MCF 10A (cell line): ENCODE measurements at regions of chr5 and their contacts with region 1.

Region 1: GRCh38 chr5:142611154-142611553 is 74.7 kb downstream of the FGF1 start:
- DNase-seq: peak; percentile 85
- H3K4me3 Mint-ChIP-seq: no peak overlapping the region
- H3K27ac Mint-ChIP-seq: peak overlapping the region; percentile 29
- H3K4me1 Mint-ChIP-seq: peaks cover 5% of the 10 kb centered on the region
- H3K27me3 Mint-ChIP-seq: no peaks in the 10 kb centered on the region
- CTCF ChIP-seq: peak; percentile 99

Region 2: DNA sequence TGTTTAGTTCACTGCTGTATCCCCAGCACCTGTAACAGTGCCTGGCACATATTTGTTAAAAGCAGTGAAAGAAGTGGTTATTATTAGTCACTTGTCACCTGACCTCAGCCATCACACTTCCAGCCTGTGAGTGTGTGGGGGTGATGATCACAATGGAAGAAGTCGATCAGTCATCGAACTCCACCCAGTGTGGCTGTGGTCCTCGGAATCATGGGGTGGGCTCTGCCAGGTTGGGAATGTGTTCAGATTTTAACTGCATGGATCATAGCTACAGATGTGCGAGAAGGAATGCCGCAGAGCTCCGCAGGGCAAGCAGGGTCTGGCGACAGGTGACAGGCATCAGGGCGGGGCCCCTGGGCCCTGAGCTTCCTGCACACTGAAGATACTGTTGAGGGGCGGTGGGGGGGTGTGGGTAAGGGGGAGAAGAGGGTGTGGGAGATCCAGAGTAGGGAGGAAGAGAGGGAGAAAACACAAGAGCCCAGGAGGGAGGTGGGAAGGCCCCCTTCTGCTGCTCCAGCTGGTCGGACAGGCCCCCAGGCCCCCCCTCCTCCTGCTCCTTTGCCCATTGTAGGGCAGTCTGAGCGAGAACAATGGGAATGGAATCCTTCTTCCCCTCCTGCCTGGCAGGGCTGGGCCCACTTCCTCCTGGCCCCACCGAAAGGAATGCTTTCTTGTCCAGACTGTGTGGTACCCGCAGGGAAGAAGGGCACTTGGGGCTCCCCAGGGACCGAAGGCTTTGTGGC is 375.9 kb before region 1 on chr5:
- CTCF ChIA-PET with region 1: no interaction called
- POLR2A ChIA-PET with region 1: no interaction called
- intact Hi-C with region 1: no loop called
- DNase-seq: no peak
- H3K4me3 Mint-ChIP-seq: no peak overlapping the region
- H3K27ac Mint-ChIP-seq: no peak overlapping the region
- H3K4me1 Mint-ChIP-seq: peaks cover 5% of the 10 kb centered on the region
- H3K27me3 Mint-ChIP-seq: no peaks in the 10 kb centered on the region
- CTCF ChIP-seq: no peak

Region 3: GRCh38 chr5:142304013-142304701 is 307.0 kb before region 1 on chr5:
- CTCF ChIA-PET with region 1: no interaction called
- POLR2A ChIA-PET with region 1: no interaction called
- intact Hi-C with region 1: no loop called
- DNase-seq: no peak
- H3K4me3 Mint-ChIP-seq: no peak overlapping the region
- H3K27ac Mint-ChIP-seq: no peak overlapping the region
- H3K4me1 Mint-ChIP-seq: peaks cover 6% of the 10 kb centered on the region
- H3K27me3 Mint-ChIP-seq: no peaks in the 10 kb centered on the region
- CTCF ChIP-seq: no peak

Region 4: DNA sequence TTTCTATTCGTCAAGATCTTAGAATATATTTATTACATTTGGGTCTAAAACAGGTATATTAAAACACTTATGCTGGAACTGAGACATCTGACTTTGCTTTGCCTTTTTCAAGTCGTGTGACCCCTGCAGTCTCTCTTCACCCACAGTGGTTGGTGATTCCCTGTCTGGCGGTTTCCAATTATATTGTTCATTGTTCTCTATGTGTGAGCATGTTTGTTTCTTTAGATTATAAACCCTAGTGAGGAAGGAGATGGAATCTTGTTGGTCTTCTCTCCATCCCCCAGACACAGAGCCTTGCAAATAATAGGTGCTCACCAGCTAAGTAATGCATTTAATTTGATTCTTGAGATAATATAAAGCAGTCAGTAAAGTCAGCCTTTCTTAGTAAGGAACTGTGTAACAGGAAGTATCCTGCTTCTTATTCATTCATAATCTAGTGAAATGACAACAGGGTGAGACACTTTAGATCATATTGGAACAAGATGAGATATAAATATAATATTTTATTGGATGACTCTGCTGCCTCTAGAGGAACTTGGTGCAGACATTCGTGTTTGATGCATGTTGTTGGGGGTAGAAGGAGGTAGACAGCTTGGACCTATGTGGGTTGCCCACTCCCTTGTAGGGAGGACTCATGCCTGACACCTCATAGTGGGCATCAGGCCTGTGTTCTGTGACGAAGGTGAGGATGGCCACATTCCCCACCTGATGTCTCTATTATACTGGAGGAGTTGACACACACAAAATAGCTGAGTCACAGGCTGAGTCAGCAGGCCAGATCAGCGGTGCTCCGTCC is 13.4 kb before region 1 on chr5:
- CTCF ChIA-PET with region 1: interaction called, 44 read pairs
- POLR2A ChIA-PET with region 1: interaction called, 3 read pairs
- intact Hi-C with region 1: no loop called
- DNase-seq: peak; percentile 89
- H3K4me3 Mint-ChIP-seq: no peak overlapping the region
- H3K27ac Mint-ChIP-seq: no peak overlapping the region
- H3K4me1 Mint-ChIP-seq: peaks cover 16% of the 10 kb centered on the region
- H3K27me3 Mint-ChIP-seq: no peaks in the 10 kb centered on the region
- CTCF ChIP-seq: peak; percentile 20

Region 5: DNA sequence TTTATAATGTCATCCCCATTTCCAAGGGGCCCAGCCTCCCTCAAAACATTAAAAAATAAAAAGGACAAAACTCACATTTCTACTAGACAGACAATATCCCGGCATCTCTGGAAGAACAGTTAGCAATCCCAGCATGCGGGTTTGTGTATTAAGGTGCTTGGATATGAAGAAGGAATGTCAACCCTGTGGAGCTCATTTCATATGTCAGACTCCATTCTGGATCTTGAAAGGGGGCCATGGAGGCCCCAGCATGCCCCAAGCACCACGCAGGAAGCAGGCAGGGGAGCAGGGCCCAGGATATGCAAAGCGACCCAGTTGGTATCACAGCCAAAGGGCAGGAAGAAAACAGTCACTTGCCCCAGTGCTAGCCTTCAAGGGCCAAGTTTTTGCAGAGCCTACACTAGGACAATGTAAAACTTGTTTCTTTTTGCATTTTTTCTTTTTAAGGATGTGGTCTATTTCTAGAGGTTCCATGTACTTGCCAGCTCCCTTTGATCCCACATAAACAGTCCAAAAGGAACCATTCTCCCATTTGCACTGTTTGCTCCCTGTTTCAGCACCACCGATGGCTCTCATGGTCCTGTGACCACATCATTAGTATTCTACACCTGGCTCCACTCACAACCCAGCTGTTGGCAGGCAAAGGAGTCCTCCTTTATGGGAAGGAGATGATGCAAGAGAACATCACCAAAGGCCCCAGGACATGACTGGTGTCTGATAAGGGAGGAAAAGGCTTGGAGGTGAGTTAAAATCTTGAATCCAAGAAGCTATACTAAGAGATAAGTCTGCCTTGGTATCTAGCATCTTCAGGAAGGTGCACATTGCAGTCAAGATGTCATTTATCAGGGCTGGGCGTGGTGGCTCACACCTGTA is 16.5 kb after region 1 on chr5:
- CTCF ChIA-PET with region 1: interaction called, 20 read pairs
- POLR2A ChIA-PET with region 1: no interaction called
- intact Hi-C with region 1: no loop called
- DNase-seq: peak; percentile 42
- H3K4me3 Mint-ChIP-seq: no peak overlapping the region
- H3K27ac Mint-ChIP-seq: no peak overlapping the region
- H3K4me1 Mint-ChIP-seq: no peaks in the 10 kb centered on the region
- H3K27me3 Mint-ChIP-seq: no peaks in the 10 kb centered on the region
- CTCF ChIP-seq: no peak

Region 6: GRCh38 chr5:142644640-142645361 is 33.6 kb after region 1 on chr5:
- CTCF ChIA-PET with region 1: interaction called, 38 read pairs
- POLR2A ChIA-PET with region 1: interaction called, 4 read pairs
- intact Hi-C with region 1: loop called (anchors 1 kb)
- DNase-seq: peak; percentile 99
- H3K4me3 Mint-ChIP-seq: peak overlapping the region; percentile 48
- H3K27ac Mint-ChIP-seq: peak overlapping the region; percentile 85
- H3K4me1 Mint-ChIP-seq: peaks cover 26% of the 10 kb centered on the region
- H3K27me3 Mint-ChIP-seq: no peaks in the 10 kb centered on the region
- CTCF ChIP-seq: no peak

Region 7: DNA sequence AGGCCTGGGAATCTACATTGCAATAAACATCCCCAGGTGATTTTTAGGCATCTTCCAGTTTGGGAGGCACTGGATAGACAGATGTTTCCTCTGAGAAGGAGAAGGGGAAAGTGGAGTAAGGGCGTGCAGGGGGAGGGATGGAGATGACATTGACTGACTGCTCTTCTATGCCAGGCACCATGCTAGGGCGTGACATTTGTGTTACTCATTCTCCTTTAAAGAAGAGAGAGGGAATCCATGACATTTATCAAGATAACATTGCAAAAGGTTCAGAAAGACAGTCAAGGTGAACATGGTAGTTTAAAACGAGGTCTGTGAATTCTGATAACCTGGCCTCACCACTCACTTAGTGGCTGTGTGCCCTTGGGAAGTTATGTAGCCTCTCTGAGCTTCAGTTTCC is 38.9 kb after region 1 on chr5:
- CTCF ChIA-PET with region 1: interaction called, 45 read pairs
- POLR2A ChIA-PET with region 1: interaction called, 4 read pairs
- intact Hi-C with region 1: loop called (anchors 1 kb)
- DNase-seq: no peak
- H3K4me3 Mint-ChIP-seq: no peak overlapping the region
- H3K27ac Mint-ChIP-seq: no peak overlapping the region
- H3K4me1 Mint-ChIP-seq: peaks cover 9% of the 10 kb centered on the region
- H3K27me3 Mint-ChIP-seq: no peaks in the 10 kb centered on the region
- CTCF ChIP-seq: no peak

Region 8: GRCh38 chr5:142685418-142686209 is 74.5 kb after region 1 on chr5 and contains the start of gene FGF1:
- CTCF ChIA-PET with region 1: interaction called, 24 read pairs
- POLR2A ChIA-PET with region 1: interaction called, 4 read pairs
- intact Hi-C with region 1: no loop called
- DNase-seq: peak; percentile 89
- H3K4me3 Mint-ChIP-seq: peak within 1 kb of the TSS; percentile 7
- H3K27ac Mint-ChIP-seq: peak within 1 kb of the TSS; percentile 70
- H3K4me1 Mint-ChIP-seq: peaks cover 43% of the 10 kb centered on the region
- H3K27me3 Mint-ChIP-seq: no peaks in the 10 kb centered on the region
- CTCF ChIP-seq: no peak
- total RNA-seq, gene FGF1: 0.34 and 0.65 TPM in 2 replicates

Region 9: DNA sequence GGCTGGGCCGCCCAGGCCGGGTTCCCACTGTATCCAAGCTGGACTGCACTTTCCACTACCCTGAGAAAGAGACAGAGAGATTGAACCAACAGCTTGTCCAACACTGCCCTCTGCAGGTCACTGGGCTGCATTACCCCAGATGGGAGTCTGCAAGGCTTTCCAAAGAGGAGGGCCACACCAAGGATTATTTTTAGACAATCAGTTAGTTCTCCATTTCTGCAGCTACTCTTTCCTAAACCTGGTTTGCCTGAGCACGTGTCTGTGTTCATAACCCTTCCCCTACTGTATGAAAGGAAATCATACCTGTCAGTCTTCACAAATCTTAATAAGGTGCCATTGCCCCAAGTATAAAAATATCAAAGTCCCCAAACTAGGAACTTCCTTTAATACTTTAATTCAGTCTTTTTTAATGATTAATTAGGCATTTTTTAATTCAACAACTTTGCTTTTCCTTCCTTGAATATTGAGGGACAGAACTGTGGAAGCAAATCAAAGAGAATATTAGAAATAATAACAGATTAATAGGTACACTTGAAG is 88.1 kb after region 1 on chr5:
- CTCF ChIA-PET with region 1: interaction called, 140 read pairs
- POLR2A ChIA-PET with region 1: interaction called, 3 read pairs
- intact Hi-C with region 1: loop called (anchors 1 kb)
- DNase-seq: peak; percentile 93
- H3K4me3 Mint-ChIP-seq: no peak overlapping the region
- H3K27ac Mint-ChIP-seq: no peak overlapping the region
- H3K4me1 Mint-ChIP-seq: peaks cover 14% of the 10 kb centered on the region
- H3K27me3 Mint-ChIP-seq: no peaks in the 10 kb centered on the region
- CTCF ChIP-seq: peak; percentile 100